SK-N-SH (cell line): ENCODE measurements at regions of chr1 and their contacts with region 1.

Region 1: DNA sequence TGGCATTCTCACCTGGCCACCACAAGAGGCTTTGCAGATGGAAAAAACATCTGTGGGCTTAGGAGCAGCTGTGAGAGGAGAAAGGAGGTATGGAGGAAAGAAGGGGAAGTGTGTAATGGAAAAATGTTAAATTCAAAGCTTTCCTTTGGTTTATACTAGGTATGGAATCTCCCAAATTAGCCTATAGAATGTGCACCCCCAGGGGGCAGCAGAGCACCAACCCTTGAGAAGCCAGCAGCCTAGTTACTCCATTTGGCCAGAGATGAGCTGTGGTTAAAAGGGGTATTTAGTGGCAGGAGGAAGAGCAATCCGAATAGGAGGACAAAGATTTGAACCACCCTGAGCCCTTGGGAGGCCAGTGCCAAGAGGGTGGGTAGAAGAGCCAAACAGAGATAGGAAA is 97.5 kb upstream of the CTTNBP2NL start:
- DNase-seq: peak; percentile 42
- H3K4me3 ChIP-seq: peak overlapping the region in 1 of 2 experiments; percentile 10; a peak in 1 of 4 replicates
- H3K27ac ChIP-seq: no peak overlapping the region
- H3K4me1 ChIP-seq: no peaks in the 10 kb centered on the region; a peak in 1 of 4 replicates
- H3K27me3 ChIP-seq: 0 out of 2 replicates have a peak, but pooled peaks cover 14% of the 10 kb centered on the region
- CTCF ChIP-seq: peak; percentile 61
- EP300 ChIP-seq: no peak
- RAD21 ChIP-seq: peak; percentile 69

Region 2: GRCh38 chr1:112285746-112286145 is 12.8 kb before region 1 on chr1:
- CTCF ChIA-PET with region 1: interaction called, 17 read pairs
- POLR2A ChIA-PET with region 1: no interaction called
- DNase-seq: no peak
- H3K4me3 ChIP-seq: no peak overlapping the region
- H3K27ac ChIP-seq: no peak overlapping the region
- H3K4me1 ChIP-seq: no peaks in the 10 kb centered on the region
- H3K27me3 ChIP-seq: no peaks in the 10 kb centered on the region; the same call in 1 of the 2 replicates
- CTCF ChIP-seq: no peak
- EP300 ChIP-seq: no peak
- RAD21 ChIP-seq: no peak

Region 3: GRCh38 chr1:112308716-112309115 is 10.2 kb after region 1 on chr1:
- CTCF ChIA-PET with region 1: interaction called, 11 read pairs
- POLR2A ChIA-PET with region 1: no interaction called
- DNase-seq: no peak
- H3K4me3 ChIP-seq: no peak overlapping the region
- H3K27ac ChIP-seq: no peak overlapping the region
- H3K4me1 ChIP-seq: peaks cover 0 to 7% of the 10 kb centered on the region in 2 experiments; a peak in 2 of 4 replicates
- H3K27me3 ChIP-seq: no peaks in the 10 kb centered on the region; the same call in 1 of the 2 replicates
- CTCF ChIP-seq: no peak
- EP300 ChIP-seq: no peak
- RAD21 ChIP-seq: no peak

Region 4: GRCh38 chr1:112317140-112317539 is 18.6 kb after region 1 on chr1:
- CTCF ChIA-PET with region 1: interaction called, 10 read pairs
- POLR2A ChIA-PET with region 1: no interaction called
- DNase-seq: no peak
- H3K4me3 ChIP-seq: no peak overlapping the region
- H3K27ac ChIP-seq: no peak overlapping the region
- H3K4me1 ChIP-seq: no peaks in the 10 kb centered on the region; a peak in 1 of 4 replicates
- H3K27me3 ChIP-seq: no peaks in the 10 kb centered on the region
- CTCF ChIP-seq: no peak
- EP300 ChIP-seq: no peak
- RAD21 ChIP-seq: no peak

Region 5: DNA sequence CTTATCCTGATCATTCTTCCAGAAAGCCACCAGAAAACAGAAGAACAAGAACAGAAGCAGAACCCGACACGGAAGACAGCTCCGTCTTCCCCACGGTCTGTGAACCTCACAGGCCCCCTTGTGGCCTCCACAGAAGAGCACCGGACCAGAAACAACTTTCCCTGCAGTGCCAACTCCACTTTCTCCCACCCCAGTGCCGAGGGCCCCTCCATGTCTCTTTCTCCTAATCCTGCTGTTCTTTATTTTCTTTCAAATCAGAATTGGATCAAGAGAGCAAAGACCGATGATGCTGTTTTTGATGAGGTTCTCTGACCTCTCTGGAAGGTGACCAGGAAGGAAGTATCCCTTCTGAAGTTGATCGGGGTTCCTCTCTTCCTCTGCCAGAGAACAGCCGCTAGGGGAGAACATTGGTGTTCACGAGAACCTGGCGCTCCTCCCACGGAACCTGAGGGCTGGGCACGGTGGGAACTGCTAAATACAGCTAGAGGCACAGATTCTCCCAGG is 38.5 kb after region 1 on chr1:
- CTCF ChIA-PET with region 1: interaction called, 12 read pairs
- POLR2A ChIA-PET with region 1: no interaction called
- DNase-seq: peak; percentile 42
- H3K4me3 ChIP-seq: no peak overlapping the region
- H3K27ac ChIP-seq: no peak overlapping the region
- H3K4me1 ChIP-seq: no peaks in the 10 kb centered on the region
- H3K27me3 ChIP-seq: peaks cover 45% of the 10 kb centered on the region; the same call in 1 of the 2 replicates
- CTCF ChIP-seq: peak; percentile 63
- EP300 ChIP-seq: no peak
- RAD21 ChIP-seq: peak; percentile 65

Region 6: DNA sequence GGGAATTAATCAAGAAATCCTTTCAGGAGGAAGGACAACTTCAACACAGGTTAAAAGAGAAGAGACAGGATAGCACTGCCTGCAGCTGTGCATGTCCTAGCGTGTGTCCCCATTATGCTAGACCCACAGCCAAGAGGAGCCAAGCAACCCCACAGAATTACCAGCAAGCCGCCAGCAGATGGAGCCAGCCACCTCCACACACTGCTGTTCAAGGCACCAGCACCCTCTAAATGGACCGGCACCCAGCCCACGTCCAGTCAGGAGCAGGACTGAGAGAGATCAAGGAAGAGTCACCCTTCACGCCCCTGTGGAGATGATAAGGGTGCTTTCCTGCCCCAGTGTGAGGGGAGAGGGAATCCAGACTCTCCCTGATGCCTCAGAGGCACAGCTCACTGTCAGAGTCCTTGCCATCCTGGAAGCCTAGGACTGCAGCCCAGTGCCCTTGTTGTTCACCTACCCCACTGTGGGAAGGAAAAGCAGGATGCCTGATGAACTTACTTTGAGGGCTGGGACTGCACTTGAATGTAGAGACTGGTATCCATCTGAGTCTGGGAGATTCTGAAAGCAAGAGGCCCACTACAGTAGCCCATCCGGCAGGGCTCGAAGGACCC is 60.3 kb after region 1 on chr1:
- CTCF ChIA-PET with region 1: interaction called, 13 read pairs
- POLR2A ChIA-PET with region 1: no interaction called
- DNase-seq: peak; percentile 56
- H3K4me3 ChIP-seq: peak overlapping the region in 1 of 2 experiments; percentile 27; a peak in 1 of 4 replicates
- H3K27ac ChIP-seq: no peak overlapping the region
- H3K4me1 ChIP-seq: no peaks in the 10 kb centered on the region
- H3K27me3 ChIP-seq: peaks cover 9% of the 10 kb centered on the region; the same call in 1 of the 2 replicates
- CTCF ChIP-seq: peak; percentile 73
- EP300 ChIP-seq: no peak
- RAD21 ChIP-seq: peak; percentile 65

Region 7: DNA sequence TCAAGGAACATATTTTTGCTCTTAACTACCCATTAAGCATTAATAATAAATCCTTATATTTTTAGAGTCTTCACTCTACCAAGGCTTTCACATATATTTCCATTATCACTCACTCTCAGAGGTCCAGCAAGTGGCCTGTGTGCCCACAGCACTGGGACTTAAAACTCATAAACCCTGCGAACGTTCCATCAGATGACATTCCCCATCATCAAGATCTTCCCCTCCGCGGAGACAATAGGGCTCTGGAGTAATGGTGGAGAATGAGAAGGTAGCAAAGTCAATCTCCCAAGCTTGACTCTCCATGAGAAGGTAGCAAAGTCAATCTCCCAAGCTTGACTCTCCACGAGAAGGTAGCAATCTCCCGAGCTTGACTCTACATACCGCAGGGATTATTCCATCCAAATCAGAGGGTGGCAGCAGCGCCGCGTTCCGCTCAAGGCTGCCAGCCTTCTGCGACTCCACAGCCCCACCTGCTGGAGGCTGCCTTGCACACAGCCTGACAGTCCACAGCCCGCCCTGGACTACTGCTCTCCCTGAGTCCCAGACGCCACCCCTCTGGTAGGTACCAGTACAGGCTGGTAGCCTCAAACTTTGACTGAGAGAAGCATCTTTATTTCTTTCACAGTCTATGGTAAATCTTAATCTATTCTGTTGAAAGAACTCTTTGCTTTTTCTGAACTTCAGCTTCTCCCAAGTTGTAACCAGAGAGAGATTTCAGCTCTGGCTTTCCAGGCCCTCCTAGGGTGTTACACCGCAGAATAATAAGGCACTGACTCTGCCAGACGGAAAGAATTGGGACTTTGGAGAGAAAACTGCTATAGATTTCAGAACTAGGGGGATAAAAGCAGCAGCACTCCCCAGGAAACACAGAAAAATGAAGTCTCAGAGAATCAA is 71.1 kb after region 1 on chr1:
- CTCF ChIA-PET with region 1: interaction called, 23 read pairs
- POLR2A ChIA-PET with region 1: no interaction called
- DNase-seq: peak; percentile 83
- H3K4me3 ChIP-seq: peak overlapping the region in 1 of 2 experiments; percentile 42; a peak in 1 of 4 replicates
- H3K27ac ChIP-seq: no peak overlapping the region
- H3K4me1 ChIP-seq: no peaks in the 10 kb centered on the region; a peak in 1 of 4 replicates
- H3K27me3 ChIP-seq: peaks cover 33% of the 10 kb centered on the region
- CTCF ChIP-seq: peak; percentile 94
- EP300 ChIP-seq: no peak
- RAD21 ChIP-seq: peak; percentile 90